Transverse colon (tissue), 4 donors: ENCODE measurements at regions of chr11 and their contacts with region 1.

Region 1: DNA sequence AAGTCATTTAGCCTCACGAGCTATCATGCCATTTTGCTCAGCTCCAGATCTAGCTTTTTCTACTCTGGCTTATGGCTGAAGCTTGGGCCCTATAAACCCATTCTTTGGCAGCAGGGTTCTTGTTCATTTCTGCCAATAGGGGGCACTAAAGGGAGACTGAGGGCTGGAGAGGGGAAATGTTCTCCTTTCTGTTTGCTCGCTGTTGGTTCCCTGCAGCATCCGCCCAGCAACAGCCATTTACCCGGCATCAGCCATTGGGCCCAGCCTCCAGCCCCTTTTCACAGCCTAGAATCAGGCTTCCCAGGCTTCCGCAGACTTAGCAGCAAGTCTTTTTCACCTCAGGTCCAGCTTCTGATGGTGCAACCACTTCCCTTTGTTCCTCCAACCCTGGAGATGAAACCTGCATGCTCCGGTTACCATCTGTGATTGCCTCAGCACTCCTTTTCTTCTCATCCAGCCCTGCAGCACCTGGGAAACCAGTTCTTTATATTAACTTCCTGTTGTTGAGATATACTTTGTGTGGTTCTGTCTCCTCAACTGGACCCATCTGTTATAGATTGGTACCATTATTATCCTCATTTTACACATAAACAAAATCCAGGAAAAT is 4.2 kb upstream of the ME3 start:
- DNase-seq: no peak
- H3K4me3 ChIP-seq: no peak overlapping the region
- H3K27ac ChIP-seq: peak overlapping the region; percentile 92 to 93 (median 92)
- H3K4me1 ChIP-seq: peaks cover 18 to 51% (median 37%) of the 10 kb centered on the region in 4 donors
- H3K27me3 ChIP-seq: no peaks in the 10 kb centered on the region
- CTCF ChIP-seq: peak in 3 of 5 experiments; percentile 26 to 50 (median 34)
- EP300 ChIP-seq: no peak
- POLR2A ChIP-seq: no peak

Region 2: DNA sequence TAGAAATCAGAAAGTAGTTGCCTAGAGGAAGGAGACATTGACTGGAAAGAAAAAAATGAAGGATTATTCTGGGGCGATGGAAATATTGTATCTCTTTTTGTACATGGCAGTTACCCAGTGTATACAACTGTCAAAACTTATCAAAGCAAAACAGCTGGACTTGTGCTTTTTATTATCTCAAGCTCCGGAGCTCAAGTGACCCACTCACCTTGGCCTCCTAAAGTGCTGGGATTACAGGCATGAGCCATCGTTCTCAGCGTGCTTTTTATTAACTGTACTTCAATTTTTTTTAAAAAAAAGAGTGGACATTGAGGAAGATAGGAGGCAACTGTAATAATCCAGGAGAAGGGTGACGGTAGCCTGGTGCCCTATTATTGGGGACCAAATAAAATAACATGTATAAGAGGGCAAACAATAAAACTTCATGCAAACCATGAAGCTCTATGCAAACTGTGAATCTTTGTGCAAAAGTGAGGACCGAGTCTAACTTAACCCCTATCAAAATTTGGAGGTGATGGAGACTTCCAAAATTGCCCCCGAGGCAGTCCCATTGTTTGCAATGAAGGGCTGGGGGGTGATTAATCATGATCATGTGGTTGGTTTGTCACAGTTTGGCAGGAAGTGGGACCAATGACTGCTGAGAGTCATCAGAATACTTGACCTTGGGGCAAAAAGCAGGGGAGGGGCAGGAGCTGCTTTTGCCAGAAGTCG is 255.1 kb after region 1 on chr11:
- in situ Hi-C with region 1: no loop called
- intact Hi-C with region 1: no loop called
- DNase-seq: no peak
- H3K4me3 ChIP-seq: no peak overlapping the region
- H3K27ac ChIP-seq: peak overlapping the region in 2 of 4 donors; percentile 19 to 26
- H3K4me1 ChIP-seq: peaks cover 4 to 24% (median 4%) of the 10 kb centered on the region in 4 donors
- H3K27me3 ChIP-seq: no peaks in the 10 kb centered on the region
- CTCF ChIP-seq: no peak
- EP300 ChIP-seq: no peak
- POLR2A ChIP-seq: no peak

Region 3: GRCh38 chr11:87046824-87047223 is 370.2 kb after region 1 on chr11:
- in situ Hi-C with region 1: no loop called
- intact Hi-C with region 1: loop called (anchors 5 kb)
- DNase-seq: no peak
- H3K4me3 ChIP-seq: no peak overlapping the region
- H3K27ac ChIP-seq: no peak overlapping the region
- H3K4me1 ChIP-seq: no peaks in the 10 kb centered on the region
- H3K27me3 ChIP-seq: no peaks in the 10 kb centered on the region
- CTCF ChIP-seq: no peak
- EP300 ChIP-seq: no peak
- POLR2A ChIP-seq: no peak